Activated naive CD4-positive, alpha-beta T cell treated with anti-CD3 and anti-CD28 coated beads, Interleukin-2, amount 10 ng/mL, durations not matched to agents 7 days and 5 days (primary cell): ENCODE measurements at regions of chr2 and their contacts with region 1.

Region 1: GRCh38 chr2:96951093-96951654 is 35.2 kb downstream of the FAM178B start:
- DNase-seq: peak; percentile 87
- H3K4me3 Mint-ChIP-seq: no peak overlapping the region
- H3K27ac Mint-ChIP-seq: no peak overlapping the region
- H3K4me1 Mint-ChIP-seq: peaks cover 40% of the 10 kb centered on the region
- H3K27me3 Mint-ChIP-seq: peaks cover 53% of the 10 kb centered on the region

Region 2: GRCh38 chr2:96848264-96848663 is 102.9 kb before region 1 on chr2:
- CTCF ChIA-PET with region 1: no interaction called
- DNase-seq: no peak
- H3K4me3 Mint-ChIP-seq: no peak overlapping the region
- H3K27ac Mint-ChIP-seq: no peak overlapping the region
- H3K4me1 Mint-ChIP-seq: peaks cover 3% of the 10 kb centered on the region
- H3K27me3 Mint-ChIP-seq: no peaks in the 10 kb centered on the region

Region 3: DNA sequence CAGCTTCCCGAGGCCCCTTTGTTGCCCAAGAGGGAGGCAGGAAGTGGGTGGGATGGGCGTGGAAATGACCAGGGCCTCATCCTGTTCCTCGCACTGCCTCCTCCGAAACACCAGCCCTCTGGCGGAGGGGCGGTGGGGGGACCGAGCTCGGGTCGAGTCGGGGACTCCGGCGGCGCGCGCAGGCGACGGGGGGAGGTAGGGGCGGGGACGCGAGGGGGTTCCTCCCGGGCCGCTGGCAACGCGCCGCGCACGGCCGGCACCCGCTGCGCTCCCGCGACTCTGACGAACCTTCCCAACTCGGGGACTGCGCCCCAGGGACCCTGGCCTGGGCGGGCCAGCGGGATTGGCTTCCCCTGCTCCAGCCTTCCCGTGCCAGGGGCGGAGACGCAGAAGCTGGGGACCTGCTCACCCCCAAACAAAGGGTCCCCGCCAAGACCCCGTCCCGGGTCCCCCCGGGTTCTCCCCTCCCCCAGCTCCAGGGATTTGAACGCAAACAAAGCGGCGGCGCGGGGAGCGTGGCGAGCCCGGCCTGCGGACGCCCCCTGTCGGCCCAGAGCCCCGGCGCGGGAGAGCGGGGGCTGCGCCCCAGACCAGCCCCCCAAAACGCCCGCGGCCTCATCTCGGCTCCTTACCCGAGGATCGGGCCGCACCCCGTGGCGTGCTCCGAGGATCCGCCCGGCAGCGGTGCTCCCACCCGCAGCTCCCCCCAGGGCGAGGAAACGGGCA is 82.5 kb before region 1 on chr2:
- CTCF ChIA-PET with region 1: interaction called, 25 read pairs
- DNase-seq: peak; percentile 83
- H3K4me3 Mint-ChIP-seq: peak overlapping the region; percentile 85
- H3K27ac Mint-ChIP-seq: peak overlapping the region; percentile 84
- H3K4me1 Mint-ChIP-seq: peaks cover 39% of the 10 kb centered on the region
- H3K27me3 Mint-ChIP-seq: peaks cover 41% of the 10 kb centered on the region

Region 4: DNA sequence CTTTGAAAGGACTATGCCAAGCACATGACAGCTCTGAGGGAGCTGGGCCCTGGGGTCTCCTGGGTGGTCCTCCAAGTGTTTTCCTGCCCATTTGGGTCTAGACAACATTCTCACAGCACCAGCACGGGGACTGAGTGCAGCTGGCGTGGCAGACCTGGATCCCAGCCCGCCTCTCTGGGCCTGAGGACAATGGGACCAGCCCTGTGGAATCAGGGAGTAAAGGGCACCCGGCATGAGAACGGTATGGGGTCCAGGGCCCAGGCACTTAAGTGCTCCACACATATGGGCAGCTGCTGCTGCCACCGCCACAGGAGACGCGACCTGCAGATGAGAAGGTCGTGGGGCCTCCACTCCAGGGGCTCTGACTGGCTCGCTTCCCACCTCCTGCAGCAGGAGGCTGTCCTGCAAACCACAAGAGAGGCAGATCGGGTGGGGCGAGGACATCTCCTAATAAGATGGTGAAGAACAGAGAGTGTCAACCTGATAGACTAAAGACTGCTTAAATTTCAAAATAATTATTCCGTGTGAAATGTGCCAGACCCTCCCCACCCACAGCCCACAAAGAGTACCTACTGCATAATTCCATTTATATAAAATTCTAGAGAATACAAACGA is 11.1 kb before region 1 on chr2:
- CTCF ChIA-PET with region 1: interaction called, 15 read pairs
- DNase-seq: no peak
- H3K4me3 Mint-ChIP-seq: peak overlapping the region; percentile 4
- H3K27ac Mint-ChIP-seq: peak overlapping the region; percentile 93
- H3K4me1 Mint-ChIP-seq: peaks cover 52% of the 10 kb centered on the region
- H3K27me3 Mint-ChIP-seq: peaks cover 18% of the 10 kb centered on the region

Region 5: GRCh38 chr2:96970248-96970875 is 19.2 kb after region 1 on chr2:
- CTCF ChIA-PET with region 1: no interaction called
- DNase-seq: no peak
- H3K4me3 Mint-ChIP-seq: no peak overlapping the region
- H3K27ac Mint-ChIP-seq: no peak overlapping the region
- H3K4me1 Mint-ChIP-seq: peaks cover 76% of the 10 kb centered on the region
- H3K27me3 Mint-ChIP-seq: peaks cover 13% of the 10 kb centered on the region